ENCODE measurements at regions of chrX and their contacts with region 1.

Region 1: GRCh38 chrX:97060020-97060419 is 176.3 kb downstream of the RPA4 start:
- DNase-seq: no peak
- H3K27ac ChIP-seq: no peak overlapping the region
- CTCF ChIP-seq: no peak

Region 2: GRCh38 chrX:97089116-97089515 is 29.1 kb after region 1 on chrX:
- CTCF ChIA-PET with region 1: interaction called, 11 read pairs
- POLR2A ChIA-PET with region 1: no interaction called
- DNase-seq: no peak
- H3K27ac ChIP-seq: no peak overlapping the region
- CTCF ChIP-seq: no peak